ENCODE measurements at regions of chrX and their contacts with region 1.

Region 1: GRCh38 chrX:64394874-64395567 is at the start of gene MTMR8:
- DNase-seq: peak; percentile 53 to 86 (median 77)
- ATAC-seq: peak; percentile 87
- H3K4me3 ChIP-seq: peak within 1 kb of the TSS; percentile 60 to 87
- H3K4me3 Mint-ChIP-seq: peak within 1 kb of the TSS; percentile 94
- H3K27ac ChIP-seq: peak within 1 kb of the TSS; percentile 32 to 44
- H3K27ac Mint-ChIP-seq: peak within 1 kb of the TSS; percentile 91
- H3K4me1 ChIP-seq: peaks cover 4% of the 10 kb centered on the region
- H3K4me1 Mint-ChIP-seq: peaks cover 47% of the 10 kb centered on the region
- H3K27me3 ChIP-seq: no peaks in the 10 kb centered on the region
- H3K27me3 Mint-ChIP-seq: no peaks in the 10 kb centered on the region
- CTCF ChIP-seq: no peak
- total RNA-seq, gene MTMR8: 2.1 to 2.5 TPM

Region 2: DNA sequence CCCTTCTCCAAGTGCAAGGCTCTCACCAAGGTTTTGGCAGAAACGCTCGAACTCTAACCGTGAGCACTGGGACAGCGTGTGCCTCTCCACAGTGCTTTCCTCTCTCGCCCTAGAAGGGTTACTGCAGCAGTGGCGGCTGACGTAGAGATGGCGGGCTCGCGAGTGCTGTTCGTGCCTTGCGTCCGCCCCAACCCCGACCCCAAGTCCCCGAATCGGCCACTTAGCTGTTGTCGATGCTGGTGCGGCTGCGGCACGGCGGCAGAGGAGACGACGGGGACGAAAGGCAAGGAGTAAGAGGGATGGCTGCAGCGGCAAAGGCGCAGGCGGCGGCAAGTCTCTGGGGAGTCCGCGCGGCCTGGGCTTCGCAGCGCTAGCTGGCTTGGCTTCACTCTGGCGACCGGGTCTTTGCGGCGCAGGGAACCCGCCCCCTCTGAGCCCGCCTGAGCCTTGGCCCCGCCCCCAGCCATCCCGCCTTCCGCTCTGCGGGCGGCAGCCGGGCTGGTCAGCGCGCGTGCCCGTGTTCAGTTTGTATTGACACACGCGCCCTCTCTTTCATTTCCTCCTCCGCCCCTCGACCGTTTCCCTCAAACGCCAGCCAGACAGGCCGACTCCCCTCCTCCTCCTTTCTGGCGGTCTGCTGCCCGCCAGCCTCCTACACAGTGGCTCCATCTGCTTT is 1043.9 kb before region 1 on chrX and contains the start of gene SPIN4:
- CTCF ChIA-PET with region 1: no interaction called
- POLR2A ChIA-PET with region 1: no interaction called
- intact Hi-C with region 1: loop called in 1 of 2 experiments (anchors 10 kb)
- DNase-seq: peak; percentile 7 to 79 (median 53)
- ATAC-seq: peak; percentile 80
- H3K4me3 ChIP-seq: peak within 1 kb of the TSS; percentile 66 to 71
- H3K4me3 Mint-ChIP-seq: peak within 1 kb of the TSS; percentile 91
- H3K27ac ChIP-seq: peak within 1 kb of the TSS; percentile 29 to 63
- H3K27ac Mint-ChIP-seq: peak within 1 kb of the TSS; percentile 66
- H3K4me1 ChIP-seq: peaks cover 8% of the 10 kb centered on the region
- H3K4me1 Mint-ChIP-seq: peaks cover 26% of the 10 kb centered on the region
- H3K27me3 ChIP-seq: no peaks in the 10 kb centered on the region
- H3K27me3 Mint-ChIP-seq: no peaks in the 10 kb centered on the region
- CTCF ChIP-seq: no peak
- total RNA-seq, gene SPIN4: 1.0 to 1.3 TPM

Region 3: GRCh38 chrX:63551856-63552255 is 843.2 kb before region 1 on chrX:
- CTCF ChIA-PET with region 1: no interaction called
- POLR2A ChIA-PET with region 1: no interaction called
- intact Hi-C with region 1: loop called in 1 of 2 experiments (anchors 10 kb)
- DNase-seq: no peak
- ATAC-seq: no peak
- H3K4me3 ChIP-seq: no peak overlapping the region
- H3K4me3 Mint-ChIP-seq: no peak overlapping the region
- H3K27ac ChIP-seq: no peak overlapping the region
- H3K27ac Mint-ChIP-seq: no peak overlapping the region
- H3K4me1 ChIP-seq: no peaks in the 10 kb centered on the region
- H3K4me1 Mint-ChIP-seq: peaks cover 2% of the 10 kb centered on the region
- H3K27me3 ChIP-seq: no peaks in the 10 kb centered on the region
- H3K27me3 Mint-ChIP-seq: no peaks in the 10 kb centered on the region
- CTCF ChIP-seq: no peak

Region 4: DNA sequence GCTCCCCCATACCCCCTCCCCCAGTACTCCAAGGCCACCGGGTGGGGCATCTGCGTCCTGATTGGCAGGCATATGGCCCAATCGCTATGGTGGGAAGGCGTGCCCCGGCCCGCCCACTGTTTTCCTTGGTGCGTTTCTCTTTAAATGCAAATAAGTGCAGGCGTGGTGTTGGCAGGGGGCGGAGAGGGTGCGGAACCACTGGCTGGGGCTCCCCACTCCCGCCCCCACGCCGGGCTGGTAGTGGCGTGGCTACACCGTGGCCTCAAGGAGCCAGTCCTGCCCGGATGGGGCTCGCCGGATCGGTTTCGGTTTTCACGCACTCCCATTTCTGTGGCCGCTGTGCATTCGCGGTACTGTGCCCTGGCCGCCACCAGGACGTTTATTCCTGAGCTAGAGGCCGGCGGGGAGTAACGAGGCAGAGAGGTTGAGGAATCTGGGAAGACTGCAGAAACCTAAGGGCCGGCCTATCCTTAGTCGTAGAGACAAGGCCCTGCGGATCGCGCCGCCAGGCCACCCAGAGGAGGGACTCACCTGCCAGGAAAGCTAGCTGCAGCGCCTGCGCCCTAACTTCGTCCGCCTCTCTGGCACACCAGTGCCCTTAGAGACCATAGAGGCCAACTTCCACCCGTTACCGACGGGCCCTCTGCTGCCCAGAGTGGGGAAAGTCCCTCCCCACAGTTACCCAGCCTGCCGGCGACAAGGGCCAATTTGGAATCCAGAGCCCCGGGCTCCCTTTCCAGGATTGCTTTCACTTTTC is 189.1 kb before region 1 on chrX:
- CTCF ChIA-PET with region 1: no interaction called
- POLR2A ChIA-PET with region 1: no interaction called
- intact Hi-C with region 1: loop called (anchors 1 to 2 kb)
- DNase-seq: peak; percentile 67 to 92 (median 86)
- ATAC-seq: peak; percentile 88
- H3K4me3 ChIP-seq: peak overlapping the region; percentile 57 to 82
- H3K4me3 Mint-ChIP-seq: peak overlapping the region; percentile 92
- H3K27ac ChIP-seq: peak overlapping the region; percentile 77 to 90
- H3K27ac Mint-ChIP-seq: peak overlapping the region; percentile 93
- H3K4me1 ChIP-seq: peaks cover 11% of the 10 kb centered on the region
- H3K4me1 Mint-ChIP-seq: peaks cover 23% of the 10 kb centered on the region
- H3K27me3 ChIP-seq: no peaks in the 10 kb centered on the region
- H3K27me3 Mint-ChIP-seq: no peaks in the 10 kb centered on the region
- CTCF ChIP-seq: no peak

Region 5: GRCh38 chrX:64975989-64976672 is 581.1 kb after region 1 on chrX and contains the start of gene ZC4H2:
- CTCF ChIA-PET with region 1: no interaction called
- POLR2A ChIA-PET with region 1: no interaction called
- intact Hi-C with region 1: loop called (anchors 2 to 5 kb)
- DNase-seq: peak; percentile 31 to 81 (median 65)
- ATAC-seq: peak; percentile 95
- H3K4me3 ChIP-seq: peak within 1 kb of the TSS; percentile 60 to 81
- H3K4me3 Mint-ChIP-seq: peak within 1 kb of the TSS; percentile 95
- H3K27ac ChIP-seq: peak within 1 kb of the TSS; percentile 31 to 37
- H3K27ac Mint-ChIP-seq: peak within 1 kb of the TSS; percentile 91
- H3K4me1 ChIP-seq: peaks cover 10% of the 10 kb centered on the region
- H3K4me1 Mint-ChIP-seq: peaks cover 33% of the 10 kb centered on the region
- H3K27me3 ChIP-seq: no peaks in the 10 kb centered on the region
- H3K27me3 Mint-ChIP-seq: no peaks in the 10 kb centered on the region
- CTCF ChIP-seq: no peak
- total RNA-seq, gene ZC4H2: 3.2 to 6.5 TPM

Region 6: GRCh38 chrX:65034668-65035445 is 639.8 kb after region 1 on chrX:
- CTCF ChIA-PET with region 1: no interaction called
- POLR2A ChIA-PET with region 1: no interaction called
- intact Hi-C with region 1: loop called (anchors 2 to 10 kb)
- DNase-seq: peak; percentile 59 to 89 (median 80)
- ATAC-seq: peak; percentile 85
- H3K4me3 ChIP-seq: peak within 1 kb of the TSS; percentile 64 to 66
- H3K4me3 Mint-ChIP-seq: peak within 1 kb of the TSS; percentile 94
- H3K27ac ChIP-seq: peak within 1 kb of the TSS; percentile 72 to 78
- H3K27ac Mint-ChIP-seq: peak within 1 kb of the TSS; percentile 96
- H3K4me1 ChIP-seq: peaks cover 10% of the 10 kb centered on the region
- H3K4me1 Mint-ChIP-seq: peaks cover 37% of the 10 kb centered on the region
- H3K27me3 ChIP-seq: no peaks in the 10 kb centered on the region
- H3K27me3 Mint-ChIP-seq: no peaks in the 10 kb centered on the region
- CTCF ChIP-seq: peak; percentile 46

Region 7: DNA sequence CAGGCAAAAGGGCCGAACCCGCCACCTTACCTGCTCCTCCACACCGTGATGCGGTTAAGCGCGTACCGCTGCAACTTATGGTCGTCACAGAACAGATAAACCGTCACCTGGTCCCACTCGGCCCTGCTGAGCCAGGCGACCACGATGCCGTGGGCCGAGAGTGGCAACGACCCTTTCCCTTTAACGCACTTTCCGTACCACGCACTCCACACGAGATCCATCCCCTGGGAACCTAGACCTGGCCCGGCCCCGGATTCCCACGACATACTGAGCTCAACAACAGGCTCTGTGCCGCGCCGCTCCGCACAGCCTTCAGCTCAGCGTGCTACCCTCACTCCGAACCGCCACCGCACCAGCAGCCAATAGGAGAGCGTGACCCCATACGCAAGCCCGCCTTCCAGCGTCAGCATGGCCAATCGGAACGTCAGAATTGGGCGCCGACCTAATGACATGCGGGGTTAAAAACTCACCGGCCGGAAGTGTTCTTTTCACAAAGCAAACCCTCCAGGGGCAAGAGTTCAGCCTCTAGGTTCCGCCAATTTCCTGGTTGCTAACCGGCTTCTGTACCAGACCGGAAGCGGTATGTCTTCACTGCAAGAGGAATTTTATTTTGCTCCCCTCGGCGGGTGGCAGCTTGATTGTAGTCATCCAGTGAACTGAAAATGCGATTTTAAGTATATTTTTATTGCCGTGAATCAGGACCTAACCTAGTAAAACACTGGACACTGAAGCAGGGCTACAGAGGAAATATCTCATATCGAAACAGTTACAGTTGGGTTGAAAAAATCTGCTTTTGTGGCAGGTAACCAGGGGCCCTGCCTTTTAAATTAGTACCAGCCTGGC is 1139.7 kb after region 1 on chrX and contains the start of gene LAS1L:
- CTCF ChIA-PET with region 1: no interaction called
- POLR2A ChIA-PET with region 1: no interaction called
- intact Hi-C with region 1: loop called (anchors 2 to 10 kb)
- DNase-seq: peak; percentile 77 to 95 (median 87)
- ATAC-seq: peak; percentile 99
- H3K4me3 ChIP-seq: peak within 1 kb of the TSS; percentile 61 to 84
- H3K4me3 Mint-ChIP-seq: peak within 1 kb of the TSS; percentile 100
- H3K27ac ChIP-seq: peak within 1 kb of the TSS; percentile 71 to 77
- H3K27ac Mint-ChIP-seq: peak within 1 kb of the TSS; percentile 98
- H3K4me1 ChIP-seq: peaks cover 15% of the 10 kb centered on the region
- H3K4me1 Mint-ChIP-seq: peaks cover 22% of the 10 kb centered on the region
- H3K27me3 ChIP-seq: no peaks in the 10 kb centered on the region
- H3K27me3 Mint-ChIP-seq: no peaks in the 10 kb centered on the region
- CTCF ChIP-seq: no peak
- total RNA-seq, gene LAS1L: 52.7 to 55.3 TPM

Measured in CD8-positive, alpha-beta T cell (primary cell).